ENCODE measurements at regions of chr20 and their contacts with region 1.

Region 1: GRCh38 chr20:44521484-44522481 is at the start of gene SERINC3:
- DNase-seq: peak; percentile 98 to 100
- H3K4me3 ChIP-seq: peak within 1 kb of the TSS; percentile 77
- H3K4me3 Mint-ChIP-seq: peak within 1 kb of the TSS; percentile 68
- H3K27ac Mint-ChIP-seq: peak within 1 kb of the TSS; percentile 72
- H3K4me1 ChIP-seq: peaks cover 68% of the 10 kb centered on the region
- H3K4me1 Mint-ChIP-seq: peaks cover 68% of the 10 kb centered on the region
- H3K27me3 ChIP-seq: no peaks in the 10 kb centered on the region
- H3K27me3 Mint-ChIP-seq: no peaks in the 10 kb centered on the region
- CTCF ChIP-seq: peak in 1 of 2 experiments; percentile 22
- total RNA-seq, gene SERINC3: 179 and 185 TPM in 2 replicates

Region 2: DNA sequence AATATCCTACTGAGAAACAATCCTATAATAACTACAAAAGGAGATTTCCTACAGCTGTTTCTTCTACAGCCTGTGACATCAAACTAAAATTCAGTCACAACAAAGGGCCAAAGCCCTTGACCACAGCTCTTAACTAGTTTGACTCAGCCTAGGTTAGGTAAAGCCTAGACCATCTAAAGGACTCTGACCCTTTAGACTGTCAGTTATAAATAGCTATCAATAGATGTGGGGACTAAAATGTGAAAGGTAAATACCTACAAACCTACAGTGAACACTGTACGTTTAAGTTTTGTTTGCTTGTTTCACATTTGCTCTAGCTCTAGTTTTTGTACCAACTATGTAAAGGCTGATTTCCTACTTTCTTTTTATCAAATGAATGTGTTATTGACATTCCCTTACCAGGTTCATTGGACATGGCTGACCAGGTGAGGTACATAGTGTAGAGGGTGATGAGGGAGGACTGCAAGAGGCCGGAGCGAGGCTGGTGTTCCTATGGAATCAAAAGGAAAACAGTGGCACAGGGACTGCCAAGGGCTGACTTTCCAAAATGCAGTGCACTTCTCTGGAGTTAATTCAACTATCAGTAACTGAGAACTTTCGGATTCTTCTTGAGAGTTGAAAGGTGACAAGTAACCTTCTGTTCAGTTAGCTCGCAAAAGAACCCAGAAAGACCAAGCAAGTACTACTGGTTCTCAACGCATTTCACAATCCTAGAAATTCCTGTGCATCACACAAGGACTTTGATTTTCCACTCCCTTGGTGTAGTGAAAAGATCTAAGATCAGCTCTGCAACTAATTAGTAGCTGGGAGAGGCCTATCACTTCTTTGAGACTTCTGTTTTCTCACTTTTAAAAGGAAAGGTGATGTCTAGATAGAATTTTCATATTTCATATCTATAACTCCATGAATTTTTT is 17.1 kb before region 1 on chr20:
- CTCF ChIA-PET with region 1: interaction called, 8 read pairs
- POLR2A ChIA-PET with region 1: interaction called, 13 read pairs
- intact Hi-C with region 1: loop called (anchors 1 kb)
- DNase-seq: peak in 1 of 2 experiments; percentile 85
- H3K4me3 ChIP-seq: no peak overlapping the region
- H3K4me3 Mint-ChIP-seq: peak overlapping the region; percentile 0
- H3K27ac Mint-ChIP-seq: peak overlapping the region; percentile 7
- H3K4me1 ChIP-seq: peaks cover 31% of the 10 kb centered on the region
- H3K4me1 Mint-ChIP-seq: peaks cover 5% of the 10 kb centered on the region
- H3K27me3 ChIP-seq: no peaks in the 10 kb centered on the region
- H3K27me3 Mint-ChIP-seq: no peaks in the 10 kb centered on the region
- CTCF ChIP-seq: no peak

Region 3: DNA sequence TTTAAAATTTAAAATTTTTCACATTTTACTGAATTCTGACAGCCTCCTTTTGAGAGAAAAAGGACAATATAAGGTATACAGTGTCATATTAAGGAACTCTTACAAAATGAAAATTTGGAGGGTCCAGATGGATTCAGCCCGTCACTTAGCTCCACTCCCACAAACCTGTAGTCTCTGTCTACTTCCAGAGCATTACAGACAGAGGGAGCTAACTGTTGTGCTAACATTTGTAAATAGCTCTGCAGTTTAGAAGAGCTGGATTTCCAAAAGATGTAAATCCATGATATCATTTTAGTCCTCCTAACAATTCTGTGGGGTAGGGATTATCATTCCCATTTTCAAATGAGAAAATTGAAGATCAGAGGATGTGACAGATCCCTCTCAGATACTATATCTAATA is 16.2 kb after region 1 on chr20:
- CTCF ChIA-PET with region 1: interaction called, 3 read pairs
- POLR2A ChIA-PET with region 1: interaction called, 10 read pairs
- intact Hi-C with region 1: no loop called
- DNase-seq: no peak
- H3K4me3 ChIP-seq: no peak overlapping the region
- H3K4me3 Mint-ChIP-seq: no peak overlapping the region
- H3K27ac Mint-ChIP-seq: no peak overlapping the region
- H3K4me1 ChIP-seq: peaks cover 10% of the 10 kb centered on the region
- H3K4me1 Mint-ChIP-seq: peaks cover 6% of the 10 kb centered on the region
- H3K27me3 ChIP-seq: no peaks in the 10 kb centered on the region
- H3K27me3 Mint-ChIP-seq: no peaks in the 10 kb centered on the region
- CTCF ChIP-seq: peak in 1 of 2 experiments; percentile 22